Left colon (tissue), 2 donors: ENCODE measurements at regions of chr3 and their contacts with region 1.

Region 1: GRCh38 chr3:36362967-36363366 is 17.3 kb upstream of the STAC start:
- DNase-seq: no peak
- ATAC-seq: no peak

Region 2: GRCh38 chr3:35335703-35336102 is 1027.3 kb before region 1 on chr3:
- intact Hi-C with region 1: no loop called
- DNase-seq: no peak
- ATAC-seq: no peak

Region 3: GRCh38 chr3:36201546-36201945 is 161.4 kb before region 1 on chr3:
- intact Hi-C with region 1: loop called in 1 of 2 experiments (anchors 10 kb)
- DNase-seq: no peak
- ATAC-seq: no peak

Region 4: DNA sequence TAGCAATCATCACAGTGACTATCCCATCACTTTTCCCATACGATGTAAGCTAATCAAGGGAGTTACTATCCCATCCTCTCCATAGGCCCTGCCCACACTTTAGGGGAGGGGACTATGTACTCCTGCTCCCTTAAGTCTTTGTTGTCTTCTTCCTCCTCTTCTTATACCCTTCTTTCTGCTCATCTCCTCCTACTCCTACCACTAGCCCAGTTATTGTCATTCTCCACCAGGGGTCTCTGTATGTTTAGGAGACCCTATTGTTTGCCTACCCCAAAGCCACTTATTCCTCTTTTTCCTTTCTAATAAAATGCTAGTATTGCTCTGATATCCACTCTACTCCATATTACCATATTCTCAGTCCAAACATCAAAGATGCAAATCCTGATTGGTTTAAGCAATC is 45.2 kb after region 1 on chr3:
- intact Hi-C with region 1: no loop called
- DNase-seq: no peak
- ATAC-seq: no peak